OCI-LY7 (cell line): ENCODE measurements at regions of chr6 and their contacts with region 1.

Region 1: GRCh38 chr6:41846666-41847237 is 48.4 kb downstream of the USP49 start:
- DNase-seq: peak; percentile 60
- H3K4me3 ChIP-seq: no peak overlapping the region
- H3K27ac ChIP-seq: no peak overlapping the region
- H3K4me1 ChIP-seq: peaks cover 7% of the 10 kb centered on the region
- CTCF ChIP-seq: peak; percentile 94

Region 2: DNA sequence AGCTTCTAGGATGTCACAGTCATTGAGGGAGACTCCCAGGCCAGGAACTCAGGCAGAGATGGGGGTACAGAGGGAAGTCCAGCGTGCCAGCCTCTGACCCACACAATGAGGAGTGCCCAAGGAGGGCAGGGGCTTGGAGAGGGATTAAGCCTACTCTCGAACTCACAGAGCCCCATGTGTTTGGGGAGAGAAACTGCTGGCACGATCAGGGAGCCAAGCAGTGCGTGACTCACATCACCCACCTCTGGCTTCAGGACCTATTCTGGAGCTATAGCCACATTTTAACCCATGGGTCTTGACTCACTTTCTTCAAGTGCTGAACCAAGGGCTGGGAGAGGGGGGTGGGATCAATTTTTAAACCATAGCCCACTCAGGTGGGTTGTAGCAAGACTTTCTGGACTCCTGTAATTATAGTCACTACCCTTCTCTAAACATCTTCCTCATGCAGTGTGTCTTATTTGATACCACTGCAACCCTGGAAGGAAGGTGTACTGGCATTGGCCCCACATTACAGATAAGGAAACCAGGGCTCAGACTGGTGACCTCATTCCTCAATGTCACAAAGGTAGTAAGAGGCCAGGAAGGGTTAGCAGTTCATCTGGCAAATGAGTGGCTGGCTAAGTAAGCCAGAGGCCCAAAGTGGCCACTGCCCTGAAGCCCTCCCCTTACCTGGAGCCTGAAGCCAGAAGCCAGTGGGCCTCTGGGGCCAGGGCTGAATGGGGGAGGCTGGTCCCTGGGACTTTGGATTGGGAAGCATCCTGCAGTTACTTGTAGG is 288.5 kb before region 1 on chr6:
- CTCF ChIA-PET with region 1: no interaction called
- POLR2A ChIA-PET with region 1: no interaction called
- intact Hi-C with region 1: no loop called
- DNase-seq: no peak
- H3K4me3 ChIP-seq: no peak overlapping the region
- H3K27ac ChIP-seq: no peak overlapping the region
- H3K4me1 ChIP-seq: peaks cover 28% of the 10 kb centered on the region
- CTCF ChIP-seq: no peak

Region 3: DNA sequence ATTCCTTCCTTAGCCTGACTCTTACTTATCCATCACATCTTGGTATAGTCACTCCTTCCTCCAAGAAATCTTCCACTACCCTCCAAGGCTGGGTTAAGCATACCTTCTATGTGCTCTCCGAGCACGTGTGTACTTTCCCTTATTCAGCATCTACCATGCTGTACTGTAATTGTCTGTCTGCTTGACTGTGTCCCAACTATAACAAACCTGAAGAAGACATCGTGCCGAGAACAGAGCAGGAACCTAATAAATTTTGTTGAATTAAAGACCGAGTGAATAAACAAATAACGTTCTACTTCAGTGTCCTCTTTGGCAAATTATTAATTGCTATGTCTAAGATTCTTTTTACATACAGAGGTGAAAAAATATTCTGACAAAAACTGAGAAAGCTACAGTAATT is 12.6 kb after region 1 on chr6:
- CTCF ChIA-PET with region 1: no interaction called
- POLR2A ChIA-PET with region 1: no interaction called
- intact Hi-C with region 1: no loop called
- DNase-seq: no peak
- H3K4me3 ChIP-seq: no peak overlapping the region
- H3K27ac ChIP-seq: no peak overlapping the region
- H3K4me1 ChIP-seq: no peaks in the 10 kb centered on the region
- CTCF ChIP-seq: no peak

Region 4: DNA sequence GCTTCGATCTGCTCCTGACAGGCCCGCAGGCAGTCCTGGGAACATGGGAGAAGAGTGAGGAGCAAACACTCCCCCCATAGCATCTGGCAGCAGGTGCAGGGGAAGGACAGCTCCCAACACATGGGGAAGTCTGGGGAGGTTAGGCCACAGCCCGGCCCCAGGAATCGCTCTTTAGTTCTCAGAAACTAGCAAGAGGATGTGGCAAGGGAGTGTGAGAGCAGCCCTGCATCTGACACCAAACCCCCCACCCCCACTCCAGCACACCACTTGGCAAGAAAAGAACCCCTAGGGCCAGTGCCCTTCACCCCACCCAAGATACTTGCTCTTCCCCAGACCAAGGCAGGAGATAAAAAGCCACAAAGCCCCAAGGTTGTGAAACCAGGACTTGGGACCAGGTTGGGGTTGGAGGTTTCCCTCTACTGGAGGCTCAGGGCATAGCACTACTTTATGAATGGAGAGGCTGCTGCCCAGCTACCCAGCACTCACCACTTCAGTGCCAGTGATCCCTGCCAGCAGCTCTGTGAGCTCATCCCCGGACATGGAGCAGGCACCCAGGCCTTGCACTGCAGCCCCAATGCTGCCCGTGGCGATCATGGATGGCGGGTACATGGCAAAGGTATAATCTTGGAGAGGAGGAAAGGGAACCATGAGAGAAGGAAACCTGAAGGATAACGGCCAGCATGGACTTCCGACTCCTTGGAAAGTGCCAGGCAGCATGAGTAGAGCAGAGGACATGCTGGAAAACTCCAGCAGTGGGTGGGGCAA is 89.5 kb after region 1 on chr6:
- CTCF ChIA-PET with region 1: no interaction called
- POLR2A ChIA-PET with region 1: no interaction called
- intact Hi-C with region 1: loop called (anchors 2 kb)
- DNase-seq: peak; percentile 81
- H3K4me3 ChIP-seq: peak overlapping the region; percentile 93
- H3K27ac ChIP-seq: peak overlapping the region; percentile 82
- H3K4me1 ChIP-seq: peaks cover 66% of the 10 kb centered on the region
- CTCF ChIP-seq: peak; percentile 86